ENCODE measurements at regions of chr5 and their contacts with region 1.

Region 1: DNA sequence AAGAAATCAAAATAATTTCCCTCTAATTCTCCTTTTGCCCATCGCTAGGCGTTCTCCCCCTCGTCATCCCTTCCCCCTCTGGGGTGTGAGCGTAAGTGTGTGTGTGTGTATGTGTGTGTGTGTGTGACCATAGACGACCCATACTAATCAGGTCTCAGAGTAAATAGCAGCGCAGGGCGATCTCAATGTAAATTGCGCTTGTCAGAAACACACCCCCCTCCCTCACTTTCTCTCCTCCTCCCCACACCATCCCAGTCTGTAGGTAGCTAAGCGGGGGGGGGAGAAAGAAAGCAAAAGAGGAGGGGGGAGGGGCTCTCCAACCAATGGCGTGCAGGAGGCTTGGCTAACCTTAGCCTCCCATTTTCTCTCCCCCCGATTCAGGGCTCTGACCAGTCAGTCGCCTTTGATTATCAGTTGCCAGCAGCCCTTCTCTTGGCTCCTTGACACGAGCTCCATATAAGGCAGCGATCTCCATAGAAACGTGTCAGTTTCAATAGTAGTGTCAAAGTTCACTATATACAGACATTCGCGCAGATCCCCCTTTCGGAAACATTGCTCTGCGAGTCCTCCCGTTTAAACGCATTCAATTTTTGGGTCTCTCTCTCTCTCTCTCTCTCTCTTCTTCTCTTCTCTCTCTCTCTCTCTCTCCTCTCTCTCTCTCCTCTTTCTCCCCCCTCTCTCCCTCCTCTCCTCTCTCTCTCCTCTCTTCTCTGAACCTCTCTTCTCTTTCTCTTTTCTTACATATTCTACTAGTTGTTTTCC is at the start of gene NR2F1:
- DNase-seq: peak in 1 of 2 donors; percentile 46
- ATAC-seq: no peak
- H3K4me3 ChIP-seq: no peak within 1 kb of the TSS
- H3K4me3 Mint-ChIP-seq: no peak within 1 kb of the TSS
- H3K27ac ChIP-seq: no peak within 1 kb of the TSS
- H3K27ac Mint-ChIP-seq: no peak within 1 kb of the TSS
- H3K4me1 ChIP-seq: peaks cover 64% of the 10 kb centered on the region
- H3K4me1 Mint-ChIP-seq: peaks cover 35% of the 10 kb centered on the region in 2 donors
- H3K27me3 ChIP-seq: peaks cover 74% of the 10 kb centered on the region
- H3K27me3 Mint-ChIP-seq: peaks cover 37 to 42% of the 10 kb centered on the region in 2 donors
- CTCF ChIP-seq: no peak
- total RNA-seq, gene NR2F1: not detected

Region 2: GRCh38 chr5:93800988-93801811 is 218.3 kb after region 1 on chr5:
- intact Hi-C with region 1: loop called (anchors 1 kb)
- DNase-seq: peak in 1 of 2 donors; percentile 71
- ATAC-seq: peak in 2 of 3 donors; percentile 58 to 64
- H3K4me3 ChIP-seq: no peak overlapping the region
- H3K4me3 Mint-ChIP-seq: no peak overlapping the region
- H3K27ac ChIP-seq: no peak overlapping the region
- H3K27ac Mint-ChIP-seq: no peak overlapping the region
- H3K4me1 ChIP-seq: no peaks in the 10 kb centered on the region
- H3K4me1 Mint-ChIP-seq: peaks cover 4 to 5% of the 10 kb centered on the region in 2 donors
- H3K27me3 ChIP-seq: no peaks in the 10 kb centered on the region
- H3K27me3 Mint-ChIP-seq: no peaks in the 10 kb centered on the region
- CTCF ChIP-seq: peak; percentile 80

Region 3: DNA sequence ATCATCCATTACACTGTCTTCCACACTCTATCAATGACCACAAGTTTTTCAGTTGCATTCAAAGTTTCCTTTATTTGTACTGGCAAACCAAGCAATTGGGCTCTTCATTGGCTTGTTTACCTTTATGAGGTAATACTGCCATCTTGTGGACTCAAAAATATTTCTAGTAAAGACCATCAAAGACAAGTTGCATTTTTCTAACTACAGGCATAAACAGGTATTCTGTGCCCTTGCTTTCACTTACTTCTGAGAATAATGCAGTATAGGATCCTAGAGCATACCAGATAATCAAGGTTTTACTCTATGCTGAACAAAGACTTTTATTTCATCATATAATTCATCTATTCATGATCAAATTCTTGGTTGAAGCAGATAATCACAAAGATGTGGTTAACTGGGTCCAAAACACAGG is 332.3 kb after region 1 on chr5:
- intact Hi-C with region 1: loop called (anchors 5 kb)
- DNase-seq: peak in 1 of 2 donors; percentile 61
- ATAC-seq: peak in 2 of 3 donors; percentile 46 to 54
- H3K4me3 ChIP-seq: no peak overlapping the region
- H3K4me3 Mint-ChIP-seq: no peak overlapping the region
- H3K27ac ChIP-seq: no peak overlapping the region
- H3K27ac Mint-ChIP-seq: no peak overlapping the region
- H3K4me1 ChIP-seq: no peaks in the 10 kb centered on the region
- H3K4me1 Mint-ChIP-seq: no peaks in the 10 kb centered on the region
- H3K27me3 ChIP-seq: no peaks in the 10 kb centered on the region
- H3K27me3 Mint-ChIP-seq: no peaks in the 10 kb centered on the region
- CTCF ChIP-seq: peak; percentile 79